Endothelial cell of umbilical vein (primary cell): ENCODE measurements at regions of chr10 and their contacts with region 1.

Region 1: DNA sequence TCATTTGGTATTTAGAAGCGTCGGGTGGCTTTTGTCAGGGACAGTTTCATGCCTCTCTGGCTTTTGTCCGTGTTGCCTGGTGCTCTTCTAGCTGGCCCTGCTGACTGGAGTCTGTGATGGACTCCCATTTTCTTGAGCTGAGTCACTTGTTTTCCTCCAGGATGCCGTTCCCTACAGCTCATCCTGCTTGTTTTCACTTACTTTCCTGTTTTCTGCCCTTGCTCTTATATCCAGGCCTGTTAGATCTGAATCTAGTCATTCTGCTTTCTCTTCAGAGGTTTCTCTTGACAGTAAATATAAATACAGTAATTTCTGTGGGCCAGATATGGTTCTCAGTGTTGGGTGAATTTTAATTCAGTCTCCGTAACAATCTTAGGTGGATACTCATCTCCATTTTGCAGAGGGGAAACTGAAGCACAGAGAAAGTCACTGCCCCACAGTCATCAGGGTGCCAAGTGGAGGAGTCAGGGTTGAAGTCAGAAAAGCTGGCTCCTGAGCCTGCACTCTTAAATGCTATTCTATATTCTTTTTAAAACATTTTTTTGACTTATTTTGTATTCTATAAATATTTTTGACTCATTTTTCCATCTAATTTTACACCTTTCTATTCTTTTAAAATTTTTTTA is 85.4 kb downstream of the CCNY start:
- DNase-seq: peak; percentile 92
- H3K4me3 ChIP-seq: no peak overlapping the region
- H3K27ac ChIP-seq: peak overlapping the region; percentile 96
- H3K4me1 ChIP-seq: peaks cover 73% of the 10 kb centered on the region
- H3K27me3 ChIP-seq: no peaks in the 10 kb centered on the region
- CTCF ChIP-seq: no peak
- POLR2A ChIP-seq: peak; percentile 50

Region 2: DNA sequence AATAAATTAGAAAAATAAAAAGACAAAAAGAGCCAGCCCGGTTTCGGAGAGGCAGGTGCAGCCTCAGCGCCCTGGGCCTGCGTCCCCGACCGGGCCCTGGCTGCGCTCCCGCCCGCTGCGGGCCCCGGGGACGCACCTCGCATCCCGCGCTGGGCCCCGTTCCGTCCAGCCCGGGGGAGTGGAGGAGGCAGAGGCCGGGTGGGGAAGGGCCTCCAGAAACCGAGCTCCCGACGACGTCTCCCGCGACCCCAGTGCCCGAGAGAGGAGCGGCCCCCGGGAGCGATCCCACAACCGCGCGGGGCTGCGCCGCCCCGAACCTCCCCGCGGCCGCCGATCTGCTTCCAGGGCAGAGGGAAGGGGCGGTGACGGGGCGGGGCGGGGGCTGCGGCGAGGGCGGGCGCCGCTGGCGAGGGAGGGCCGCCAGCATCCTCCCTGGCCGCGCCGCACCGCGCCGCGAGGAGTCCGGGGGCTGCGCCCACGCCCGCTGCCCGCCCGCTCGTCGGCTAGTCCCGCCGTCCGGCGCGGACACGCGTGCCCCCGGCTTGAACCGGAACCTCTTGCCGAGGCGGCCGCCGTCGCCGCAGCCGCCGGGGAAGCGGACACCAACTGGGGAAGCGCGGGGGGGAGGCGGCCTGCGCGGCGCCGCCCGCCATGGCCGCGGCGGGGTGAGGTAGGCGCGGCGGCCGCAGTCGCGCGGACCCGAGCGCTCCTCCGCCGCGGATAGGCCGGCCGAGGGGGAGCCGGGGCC is 85.4 kb before region 1 on chr10 and contains the start of gene CCNY:
- CTCF ChIA-PET with region 1: interaction called, 4 read pairs
- POLR2A ChIA-PET with region 1: no interaction called
- dilution Hi-C with region 1: no loop called
- intact Hi-C with region 1: loop called (anchors 2 kb)
- DNase-seq: peak; percentile 67
- H3K4me3 ChIP-seq: peak within 1 kb of the TSS; percentile 72 to 97 (median 94)
- H3K27ac ChIP-seq: peak within 1 kb of the TSS; percentile 63
- H3K4me1 ChIP-seq: peaks cover 45% of the 10 kb centered on the region
- H3K27me3 ChIP-seq: no peaks in the 10 kb centered on the region
- CTCF ChIP-seq: no peak
- POLR2A ChIP-seq: peak; percentile 62
- total RNA-seq, gene CCNY: 99.3 and 107 TPM in 2 replicates

Region 3: GRCh38 chr10:35379226-35380137 is 42.2 kb before region 1 on chr10:
- CTCF ChIA-PET with region 1: interaction called, 15 read pairs
- POLR2A ChIA-PET with region 1: interaction called, 10 read pairs
- dilution Hi-C with region 1: no loop called
- intact Hi-C with region 1: loop called (anchors 1 kb)
- DNase-seq: peak; percentile 99
- H3K4me3 ChIP-seq: peak overlapping the region in 1 of 3 experiments; percentile 41
- H3K27ac ChIP-seq: peak overlapping the region; percentile 97
- H3K4me1 ChIP-seq: peaks cover 51% of the 10 kb centered on the region
- H3K27me3 ChIP-seq: no peaks in the 10 kb centered on the region
- CTCF ChIP-seq: peak; percentile 7 to 16
- POLR2A ChIP-seq: no peak

Region 4: GRCh38 chr10:35387768-35388167 is 33.9 kb before region 1 on chr10:
- CTCF ChIA-PET with region 1: interaction called, 4 read pairs
- POLR2A ChIA-PET with region 1: no interaction called
- dilution Hi-C with region 1: no loop called
- intact Hi-C with region 1: loop called (anchors 2 kb)
- DNase-seq: peak; percentile 67
- H3K4me3 ChIP-seq: no peak overlapping the region
- H3K27ac ChIP-seq: no peak overlapping the region
- H3K4me1 ChIP-seq: peaks cover 24% of the 10 kb centered on the region
- H3K27me3 ChIP-seq: no peaks in the 10 kb centered on the region
- CTCF ChIP-seq: no peak
- POLR2A ChIP-seq: no peak

Region 5: GRCh38 chr10:35398908-35399307 is 22.8 kb before region 1 on chr10:
- CTCF ChIA-PET with region 1: no interaction called
- POLR2A ChIA-PET with region 1: no interaction called
- dilution Hi-C with region 1: no loop called
- intact Hi-C with region 1: no loop called
- DNase-seq: no peak
- H3K4me3 ChIP-seq: no peak overlapping the region
- H3K27ac ChIP-seq: no peak overlapping the region
- H3K4me1 ChIP-seq: peaks cover 15% of the 10 kb centered on the region
- H3K27me3 ChIP-seq: no peaks in the 10 kb centered on the region
- CTCF ChIP-seq: no peak
- POLR2A ChIP-seq: no peak

Region 6: DNA sequence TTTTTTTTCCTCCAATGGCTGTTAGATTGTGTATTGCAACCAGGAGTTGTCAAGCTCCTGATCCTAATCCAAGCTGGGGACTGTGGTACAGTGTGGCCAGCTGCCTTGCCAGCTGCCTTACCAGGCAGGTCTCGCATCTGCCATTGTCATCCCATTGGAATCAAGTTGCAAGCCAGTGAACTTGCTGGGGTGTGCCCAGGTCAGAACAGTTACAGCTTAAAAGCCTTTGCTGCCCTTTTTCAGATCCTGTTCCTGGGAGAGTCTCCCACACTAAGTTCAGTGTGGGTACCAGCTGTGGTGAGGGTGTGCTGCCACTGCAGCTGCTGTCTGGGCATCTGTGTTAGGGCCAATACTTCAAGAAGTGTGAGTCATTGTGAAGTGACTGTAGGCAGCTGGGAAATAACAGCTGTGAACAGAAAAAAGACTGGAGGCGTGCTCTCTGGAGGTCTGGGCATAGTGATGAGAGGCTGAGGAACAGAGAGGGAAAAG is 12.5 kb before region 1 on chr10:
- CTCF ChIA-PET with region 1: interaction called, 12 read pairs
- POLR2A ChIA-PET with region 1: interaction called, 3 read pairs
- dilution Hi-C with region 1: no loop called
- intact Hi-C with region 1: no loop called
- DNase-seq: peak; percentile 77
- H3K4me3 ChIP-seq: no peak overlapping the region
- H3K27ac ChIP-seq: peak overlapping the region; percentile 38
- H3K4me1 ChIP-seq: peaks cover 32% of the 10 kb centered on the region
- H3K27me3 ChIP-seq: no peaks in the 10 kb centered on the region
- CTCF ChIP-seq: no peak
- POLR2A ChIP-seq: no peak

Region 7: GRCh38 chr10:35462491-35462934 is 40.8 kb after region 1 on chr10:
- CTCF ChIA-PET with region 1: interaction called, 4 read pairs
- POLR2A ChIA-PET with region 1: no interaction called
- dilution Hi-C with region 1: no loop called
- intact Hi-C with region 1: loop called (anchors 2 kb)
- DNase-seq: no peak
- H3K4me3 ChIP-seq: no peak overlapping the region
- H3K27ac ChIP-seq: peak overlapping the region; percentile 32
- H3K4me1 ChIP-seq: peaks cover 25% of the 10 kb centered on the region
- H3K27me3 ChIP-seq: no peaks in the 10 kb centered on the region
- CTCF ChIP-seq: no peak
- POLR2A ChIP-seq: no peak